ENCODE measurements at regions of chr3 and their contacts with region 1.

Region 1: GRCh38 chr3:149554826-149555225 is 80.3 kb downstream of the TM4SF4 start:
- DNase-seq: peak; percentile 89
- H3K4me3 ChIP-seq: no peak overlapping the region
- H3K27me3 ChIP-seq: no peaks in the 10 kb centered on the region
- CTCF ChIP-seq: no peak

Region 2: DNA sequence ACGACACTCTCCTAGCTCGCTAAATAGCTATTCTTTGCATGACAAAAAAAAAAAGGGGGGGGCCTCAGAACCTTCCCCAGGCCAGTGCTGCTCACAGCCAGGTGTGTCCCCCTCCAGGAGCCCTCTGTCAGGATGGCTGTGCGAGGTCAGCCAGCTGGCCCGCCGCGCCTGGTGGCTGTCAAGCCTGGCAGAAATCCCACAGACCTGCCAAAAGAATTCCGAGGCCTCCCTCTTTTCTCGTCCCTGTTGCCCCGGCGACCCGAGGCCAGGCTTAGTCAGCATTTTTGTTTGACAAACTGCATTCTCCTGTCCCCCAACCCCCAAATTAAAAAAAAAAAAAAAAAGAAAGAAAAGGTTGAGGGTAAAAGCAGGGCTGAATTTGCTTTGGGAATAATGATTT is 18.4 kb before region 1 on chr3:
- CTCF ChIA-PET with region 1: interaction called, 18 read pairs
- POLR2A ChIA-PET with region 1: no interaction called
- DNase-seq: no peak
- H3K4me3 ChIP-seq: no peak overlapping the region
- H3K27me3 ChIP-seq: no peaks in the 10 kb centered on the region
- CTCF ChIP-seq: no peak

Measured in BJ (cell line).